AG04450 (cell line): ENCODE measurements at regions of chr13 and their contacts with region 1.

Region 1: GRCh38 chr13:95660981-95661581 is 15.9 kb upstream of the DNAJC3 start:
- DNase-seq: no peak
- H3K4me3 ChIP-seq: no peak overlapping the region
- H3K27ac ChIP-seq: no peak overlapping the region
- H3K27me3 ChIP-seq: peaks cover 6% of the 10 kb centered on the region
- CTCF ChIP-seq: peak; percentile 67

Region 2: DNA sequence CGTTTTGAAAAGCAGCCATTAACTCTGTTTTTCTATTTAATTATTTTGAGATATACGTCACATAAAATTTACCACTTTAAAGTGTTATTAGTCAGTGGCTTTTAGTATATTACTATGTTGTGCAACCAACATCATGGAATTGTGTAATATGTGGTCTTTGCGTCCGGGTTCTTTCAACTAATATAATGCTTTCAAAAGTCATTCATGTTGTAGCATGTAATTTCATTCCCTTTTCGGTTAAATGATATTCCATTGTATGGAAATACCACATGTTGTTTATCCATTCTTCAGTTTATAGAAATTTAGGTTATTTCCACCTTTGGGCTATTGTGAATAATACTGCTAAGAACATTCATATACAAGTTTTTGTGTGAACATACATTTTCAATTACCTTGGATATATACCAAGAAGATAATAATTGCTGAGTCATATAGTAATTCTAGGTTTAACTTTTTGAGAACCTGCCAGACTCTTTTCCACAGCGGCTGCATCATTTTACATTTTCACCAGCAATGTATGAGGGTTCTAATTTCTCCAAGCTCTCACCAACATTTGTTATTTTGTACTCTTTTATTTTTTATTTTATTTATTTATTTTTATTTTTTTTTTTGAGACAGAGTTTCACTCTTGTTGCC is 136.7 kb before region 1 on chr13:
- CTCF ChIA-PET with region 1: no interaction called
- POLR2A ChIA-PET with region 1: no interaction called
- DNase-seq: no peak
- H3K4me3 ChIP-seq: no peak overlapping the region
- H3K27ac ChIP-seq: no peak overlapping the region
- H3K27me3 ChIP-seq: no peaks in the 10 kb centered on the region
- CTCF ChIP-seq: no peak

Region 3: GRCh38 chr13:95579303-95579702 is 81.8 kb before region 1 on chr13:
- CTCF ChIA-PET with region 1: interaction called, 10 read pairs
- POLR2A ChIA-PET with region 1: no interaction called
- DNase-seq: no peak
- H3K4me3 ChIP-seq: no peak overlapping the region
- H3K27ac ChIP-seq: no peak overlapping the region
- H3K27me3 ChIP-seq: no peaks in the 10 kb centered on the region
- CTCF ChIP-seq: no peak

Region 4: DNA sequence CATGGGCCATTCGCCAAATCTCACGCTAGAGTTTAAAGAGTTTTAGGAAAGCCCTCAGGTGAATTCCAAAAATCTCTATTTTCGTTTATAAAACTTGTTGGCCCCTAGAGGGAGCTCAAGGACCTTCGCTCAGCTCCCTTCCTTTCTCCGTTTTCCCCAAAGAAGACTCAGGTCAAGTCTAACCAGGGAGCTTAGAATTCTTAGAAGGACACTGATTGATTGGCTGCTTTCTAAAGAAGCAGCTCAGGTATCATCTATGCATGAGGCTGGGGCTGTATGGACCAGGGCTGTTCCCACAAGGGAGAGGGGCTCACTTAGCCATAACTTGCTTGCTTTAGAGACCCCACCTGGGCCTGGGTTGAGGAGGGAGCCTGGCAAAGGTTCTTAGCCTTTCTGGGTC is 37.1 kb before region 1 on chr13:
- CTCF ChIA-PET with region 1: interaction called, 103 read pairs
- POLR2A ChIA-PET with region 1: no interaction called
- DNase-seq: no peak
- H3K4me3 ChIP-seq: no peak overlapping the region
- H3K27ac ChIP-seq: no peak overlapping the region
- H3K27me3 ChIP-seq: no peaks in the 10 kb centered on the region
- CTCF ChIP-seq: peak; percentile 79

Region 5: GRCh38 chr13:95771905-95772304 is 110.8 kb after region 1 on chr13:
- CTCF ChIA-PET with region 1: interaction called, 10 read pairs
- POLR2A ChIA-PET with region 1: no interaction called
- DNase-seq: no peak
- H3K4me3 ChIP-seq: no peak overlapping the region
- H3K27ac ChIP-seq: no peak overlapping the region
- H3K27me3 ChIP-seq: no peaks in the 10 kb centered on the region
- CTCF ChIP-seq: no peak